Testis (tissue), 5 donors: ENCODE measurements at regions of chr11 and their contacts with region 1.

Region 1: GRCh38 chr11:33857933-33858371 is 33.9 kb downstream of the LMO2 start:
- DNase-seq: peak; percentile 83
- H3K4me3 ChIP-seq: no peak overlapping the region
- H3K27ac ChIP-seq: no peak overlapping the region
- H3K4me1 ChIP-seq: no peaks in the 10 kb centered on the region
- H3K27me3 ChIP-seq: no peaks in the 10 kb centered on the region
- CTCF ChIP-seq: peak; percentile 61 to 87 (median 84)
- POLR2A ChIP-seq: no peak

Region 2: DNA sequence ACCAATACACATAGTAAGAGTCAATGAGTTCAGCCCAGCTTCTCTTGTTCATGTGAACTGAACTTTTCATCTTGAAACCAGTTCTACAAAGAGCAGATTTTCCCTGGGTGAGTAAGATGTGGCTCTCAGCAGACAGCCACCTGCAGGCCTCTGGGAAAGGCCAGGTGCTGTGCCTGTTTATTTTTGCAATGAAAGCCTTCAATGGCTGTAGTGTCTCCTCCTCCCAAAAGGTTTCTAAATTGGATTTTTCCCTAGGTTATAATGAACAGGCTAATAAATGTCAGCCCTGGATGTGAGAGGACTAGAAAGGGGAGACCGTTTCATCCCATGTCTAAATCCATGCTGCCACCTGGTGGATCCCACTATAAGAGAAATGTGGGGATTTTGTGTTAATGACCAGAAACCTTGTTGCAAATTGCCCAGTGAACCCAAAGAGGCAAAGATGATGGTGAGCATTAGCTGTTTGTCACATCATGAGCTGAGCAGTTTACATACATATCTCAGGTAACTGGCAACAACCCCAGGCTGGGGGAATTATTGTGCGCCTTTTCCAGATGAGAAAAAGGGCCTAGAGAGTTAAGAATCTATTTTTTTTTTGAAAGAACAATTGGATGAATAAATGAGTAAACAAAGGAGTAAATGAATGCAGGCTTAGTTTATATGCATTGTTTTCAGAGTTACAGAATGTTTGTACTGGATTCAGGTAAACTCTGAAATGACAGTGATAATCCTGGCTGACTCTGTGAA is 170.0 kb before region 1 on chr11:
- intact Hi-C with region 1: no loop called
- DNase-seq: peak; percentile 80
- H3K4me3 ChIP-seq: no peak overlapping the region
- H3K27ac ChIP-seq: no peak overlapping the region
- H3K4me1 ChIP-seq: peaks cover 17% of the 10 kb centered on the region
- H3K27me3 ChIP-seq: no peaks in the 10 kb centered on the region
- CTCF ChIP-seq: peak; percentile 63 to 75 (median 75)
- POLR2A ChIP-seq: no peak

Region 3: GRCh38 chr11:33959855-33960400 is 102.0 kb after region 1 on chr11:
- intact Hi-C with region 1: no loop called
- DNase-seq: no peak
- H3K4me3 ChIP-seq: no peak overlapping the region
- H3K27ac ChIP-seq: no peak overlapping the region
- H3K4me1 ChIP-seq: no peaks in the 10 kb centered on the region
- H3K27me3 ChIP-seq: no peaks in the 10 kb centered on the region
- CTCF ChIP-seq: no peak
- POLR2A ChIP-seq: no peak

Region 4: GRCh38 chr11:33970984-33971466 is 113.1 kb after region 1 on chr11:
- intact Hi-C with region 1: loop called (anchors 5 kb)
- DNase-seq: peak; percentile 75
- H3K4me3 ChIP-seq: no peak overlapping the region
- H3K27ac ChIP-seq: no peak overlapping the region
- H3K4me1 ChIP-seq: no peaks in the 10 kb centered on the region
- H3K27me3 ChIP-seq: no peaks in the 10 kb centered on the region
- CTCF ChIP-seq: peak; percentile 40 to 58 (median 44)
- POLR2A ChIP-seq: no peak